GM12878 (cell line): ENCODE measurements at regions of chr11 and their contacts with region 1.

Region 1: DNA sequence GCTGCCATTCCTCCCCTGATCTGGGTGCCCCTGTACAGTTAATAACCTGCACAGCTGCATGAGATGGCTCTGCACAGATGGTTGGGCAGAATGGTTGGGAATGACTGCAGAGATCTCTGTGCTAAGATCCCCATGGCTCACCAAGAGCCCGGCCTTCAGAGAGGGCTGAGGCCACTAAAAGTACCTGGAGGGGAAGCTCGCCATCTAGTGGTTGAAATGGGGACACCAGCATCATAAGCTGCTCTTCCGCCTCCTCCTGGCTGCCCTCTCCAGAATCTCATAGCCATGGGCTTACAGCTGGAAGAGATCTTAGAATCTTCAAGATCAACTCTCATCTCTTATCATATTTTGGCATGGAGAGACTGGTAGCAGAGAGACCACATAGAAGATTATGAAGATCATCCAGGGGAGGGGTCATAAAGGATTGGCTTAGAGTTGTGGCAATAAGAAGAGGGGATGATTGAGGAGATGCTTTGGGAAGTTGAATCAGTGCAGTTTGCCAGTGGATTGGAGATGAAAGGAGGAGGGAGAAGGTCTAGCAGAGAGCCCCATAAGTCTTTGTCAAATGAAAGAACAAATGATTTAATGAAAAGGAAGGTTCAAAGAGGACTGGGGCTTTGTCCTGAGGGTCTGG is 22.0 kb upstream of the TLCD5 start:
- DNase-seq: peak; percentile 37
- ATAC-seq: peak; percentile 92
- H3K4me3 ChIP-seq: no peak overlapping the region
- H3K27ac ChIP-seq: no peak overlapping the region
- H3K4me1 ChIP-seq: peaks cover 7% of the 10 kb centered on the region
- H3K27me3 ChIP-seq: no peaks in the 10 kb centered on the region
- CTCF ChIP-seq: peak; percentile 92 to 99 (median 98); a peak in 5 of 6 replicates
- EP300 ChIP-seq: no peak
- POLR2A ChIP-seq: no peak
- RAD21 ChIP-seq: peak; percentile 87

Region 2: DNA sequence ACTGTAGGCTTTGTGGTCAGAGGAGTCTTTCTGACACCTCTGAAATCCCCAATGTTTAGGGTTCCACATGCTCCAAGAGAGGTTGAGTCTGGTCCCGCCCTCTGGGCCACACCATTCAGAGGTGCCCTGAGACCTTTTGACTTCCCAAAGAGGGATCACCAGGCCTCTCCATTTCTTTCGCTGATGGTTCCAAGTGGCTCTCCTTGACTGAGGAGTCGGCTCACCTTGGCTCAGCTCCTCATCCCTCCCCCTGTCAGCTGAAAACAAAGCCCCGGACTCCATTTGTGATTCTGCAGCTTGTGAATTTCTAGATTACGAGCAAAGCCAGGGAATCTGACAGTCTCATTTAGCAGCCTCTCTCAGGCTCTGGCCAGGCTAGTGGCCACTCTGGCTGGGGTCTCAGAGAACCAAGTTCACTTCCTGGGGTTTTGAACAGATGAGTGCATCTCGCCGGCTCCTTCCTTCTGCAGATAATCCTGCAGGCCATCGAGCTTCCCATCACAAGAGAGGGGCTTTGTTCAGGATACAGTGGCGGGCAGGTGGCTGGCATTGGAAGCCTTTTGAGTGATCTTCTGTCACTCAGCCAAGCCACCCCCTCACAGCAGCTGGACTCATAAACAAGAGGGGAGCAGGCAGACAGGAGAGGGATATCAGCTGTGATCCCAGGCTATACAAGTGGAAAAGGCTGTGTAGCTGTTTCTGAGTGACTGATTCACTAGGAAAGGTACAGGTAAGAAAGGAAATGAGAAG is 268.1 kb before region 1 on chr11:
- CTCF ChIA-PET with region 1: no interaction called
- POLR2A ChIA-PET with region 1: no interaction called
- RAD21 ChIA-PET with region 1: no interaction called
- SMC1A ChIA-PET with region 1: no interaction called
- in situ Hi-C with region 1: no loop called
- intact Hi-C with region 1: no loop called
- DNase-seq: no peak
- ATAC-seq: no peak
- H3K4me3 ChIP-seq: no peak overlapping the region
- H3K27ac ChIP-seq: no peak overlapping the region
- H3K4me1 ChIP-seq: no peaks in the 10 kb centered on the region
- H3K27me3 ChIP-seq: 0 out of 4 replicates have a peak, but pooled peaks cover 0 to 2% of the 10 kb centered on the region in 2 experiments
- CTCF ChIP-seq: no peak
- EP300 ChIP-seq: no peak
- POLR2A ChIP-seq: no peak
- RAD21 ChIP-seq: no peak

Region 3: DNA sequence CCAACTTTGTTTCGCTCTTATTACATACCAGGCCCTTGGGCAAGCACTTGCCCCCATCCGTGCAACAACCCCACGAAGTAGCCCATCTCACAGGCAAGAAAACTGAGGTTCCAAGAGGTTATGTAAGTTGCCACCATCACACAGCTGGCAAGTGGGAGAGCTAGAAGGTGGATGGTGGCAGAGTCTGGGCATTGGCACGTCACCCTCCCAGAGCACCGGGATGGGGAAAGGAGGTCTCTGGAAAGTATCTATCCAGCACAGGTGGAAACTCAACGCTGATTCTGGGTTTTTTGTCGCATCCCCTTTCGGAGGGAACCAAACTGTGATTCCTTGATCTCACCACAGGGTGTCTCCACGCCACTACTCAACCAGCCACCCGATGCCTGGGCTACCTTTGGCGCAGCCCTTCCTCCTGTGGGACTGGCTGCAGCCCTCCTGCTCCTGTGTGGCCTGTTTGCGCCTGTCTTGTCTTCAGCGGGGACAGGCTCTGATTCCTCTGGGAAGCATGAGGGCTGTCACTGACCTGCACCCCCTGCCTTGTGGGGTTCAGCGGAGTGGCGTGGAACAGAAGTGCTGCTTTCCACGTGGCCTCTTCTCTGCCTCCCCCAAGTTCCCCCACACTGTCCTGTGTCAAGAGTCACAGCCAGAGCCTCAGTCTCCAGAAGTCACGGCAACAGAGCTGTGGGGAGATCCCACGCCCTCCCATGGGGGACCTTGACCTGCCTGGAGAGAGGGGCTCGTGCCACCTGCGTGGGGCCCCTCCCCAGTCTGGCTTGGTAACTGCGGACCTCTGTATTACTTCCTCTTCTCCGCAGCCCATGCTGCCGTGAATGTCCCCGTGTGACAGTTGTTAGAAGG is 130.8 kb before region 1 on chr11:
- CTCF ChIA-PET with region 1: interaction called, 83 read pairs
- POLR2A ChIA-PET with region 1: no interaction called
- RAD21 ChIA-PET with region 1: interaction called, 4 read pairs
- SMC1A ChIA-PET with region 1: interaction called, 18 read pairs
- in situ Hi-C with region 1: loop called (anchors 5 kb)
- intact Hi-C with region 1: loop called (anchors 1 kb)
- DNase-seq: no peak
- ATAC-seq: peak; percentile 92
- H3K4me3 ChIP-seq: no peak overlapping the region
- H3K27ac ChIP-seq: no peak overlapping the region
- H3K4me1 ChIP-seq: no peaks in the 10 kb centered on the region
- H3K27me3 ChIP-seq: peaks cover 14% of the 10 kb centered on the region in 2 experiments
- CTCF ChIP-seq: peak; percentile 80 to 91 (median 84)
- EP300 ChIP-seq: no peak
- POLR2A ChIP-seq: no peak
- RAD21 ChIP-seq: peak; percentile 83

Region 4: GRCh38 chr11:120229451-120230424 is 73.4 kb before region 1 on chr11:
- CTCF ChIA-PET with region 1: interaction called, 783 read pairs
- POLR2A ChIA-PET with region 1: interaction called, 7 read pairs
- RAD21 ChIA-PET with region 1: interaction called, 348 read pairs
- SMC1A ChIA-PET with region 1: interaction called, 372 read pairs
- in situ Hi-C with region 1: loop called (anchors 5 kb)
- intact Hi-C with region 1: no loop called
- DNase-seq: no peak
- ATAC-seq: peak; percentile 59
- H3K4me3 ChIP-seq: no peak overlapping the region
- H3K27ac ChIP-seq: no peak overlapping the region
- H3K4me1 ChIP-seq: peaks cover 7% of the 10 kb centered on the region
- H3K27me3 ChIP-seq: peaks cover 5 to 8% of the 10 kb centered on the region in 2 experiments
- CTCF ChIP-seq: peak; percentile 62 to 74 (median 66)
- EP300 ChIP-seq: no peak
- POLR2A ChIP-seq: no peak
- RAD21 ChIP-seq: peak; percentile 71

Region 5: DNA sequence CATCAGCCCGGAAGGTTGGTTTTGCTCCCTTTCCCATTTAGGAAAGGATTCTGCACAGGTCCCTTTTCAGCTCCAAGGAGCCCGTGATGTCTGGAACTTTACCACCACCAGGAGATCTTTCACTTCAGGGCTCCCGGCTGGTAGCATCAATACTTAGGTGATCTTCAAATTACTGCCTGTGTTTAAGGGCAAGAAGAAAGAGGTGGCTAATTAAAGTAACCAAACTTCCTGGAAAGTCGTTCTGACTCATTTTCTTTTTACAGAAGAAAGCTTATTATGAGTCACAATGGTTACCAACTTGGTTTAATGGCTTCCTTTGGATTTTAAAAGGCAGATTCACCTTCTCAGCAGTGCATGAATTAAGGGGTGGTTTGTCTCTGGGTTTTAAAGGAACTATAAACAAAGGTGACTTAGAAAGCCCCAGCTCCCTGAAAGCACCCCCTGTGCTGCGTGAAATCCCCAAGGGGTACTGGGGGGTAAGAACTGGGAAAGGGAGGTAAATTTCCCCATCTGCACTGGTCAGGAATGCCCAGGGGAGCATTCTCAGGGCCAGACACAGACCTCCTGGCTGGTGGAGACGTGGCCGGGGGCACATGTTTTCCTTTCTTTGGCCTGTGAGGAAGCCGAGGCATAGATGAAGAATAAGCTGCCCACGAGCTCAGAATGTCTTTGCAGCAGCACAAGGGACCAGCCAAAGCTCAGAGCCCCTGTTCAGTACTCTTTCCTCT is 54.4 kb before region 1 on chr11:
- CTCF ChIA-PET with region 1: interaction called, 296 read pairs
- POLR2A ChIA-PET with region 1: interaction called, 4 read pairs
- RAD21 ChIA-PET with region 1: interaction called, 127 read pairs
- SMC1A ChIA-PET with region 1: interaction called, 176 read pairs
- in situ Hi-C with region 1: no loop called
- intact Hi-C with region 1: no loop called
- DNase-seq: peak; percentile 93
- ATAC-seq: peak; percentile 87
- H3K4me3 ChIP-seq: peak overlapping the region; percentile 34; the same call in 1 of the 2 replicates
- H3K27ac ChIP-seq: peak overlapping the region; percentile 39
- H3K4me1 ChIP-seq: peaks cover 37% of the 10 kb centered on the region
- H3K27me3 ChIP-seq: no peaks in the 10 kb centered on the region; a peak in 1 of 4 replicates
- CTCF ChIP-seq: no peak
- EP300 ChIP-seq: peak; percentile 91 to 95; a peak in 3 of 4 replicates
- POLR2A ChIP-seq: no peak
- RAD21 ChIP-seq: no peak

Region 6: DNA sequence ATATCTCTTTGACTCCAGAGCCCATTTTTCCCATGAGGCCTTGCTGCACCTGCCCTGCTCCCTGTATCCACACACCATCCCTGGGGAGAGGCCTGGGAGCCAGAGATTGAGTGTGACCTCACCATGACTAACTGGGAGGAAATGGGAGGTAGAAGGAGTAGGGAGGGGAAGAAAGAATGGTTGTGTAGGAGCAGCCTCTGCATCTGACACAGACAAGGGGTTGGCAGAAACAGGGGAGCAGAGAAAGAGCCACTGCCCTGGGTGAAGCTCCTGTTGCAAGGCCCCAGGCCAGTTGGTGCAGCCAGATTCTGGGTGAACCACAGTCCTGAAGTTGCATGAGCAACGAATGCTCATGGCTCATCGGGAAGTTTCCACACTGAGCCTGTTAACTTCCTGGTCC is 30.8 kb before region 1 on chr11:
- CTCF ChIA-PET with region 1: interaction called, 23 read pairs
- POLR2A ChIA-PET with region 1: no interaction called
- RAD21 ChIA-PET with region 1: interaction called, 4 read pairs
- SMC1A ChIA-PET with region 1: interaction called, 6 read pairs
- in situ Hi-C with region 1: no loop called
- intact Hi-C with region 1: no loop called
- DNase-seq: no peak
- ATAC-seq: no peak
- H3K4me3 ChIP-seq: no peak overlapping the region
- H3K27ac ChIP-seq: no peak overlapping the region
- H3K4me1 ChIP-seq: no peaks in the 10 kb centered on the region
- H3K27me3 ChIP-seq: no peaks in the 10 kb centered on the region; a peak in 3 of 4 replicates
- CTCF ChIP-seq: no peak
- EP300 ChIP-seq: no peak
- POLR2A ChIP-seq: no peak
- RAD21 ChIP-seq: no peak

Region 7: GRCh38 chr11:120316842-120317688 is 13.9 kb after region 1 on chr11:
- CTCF ChIA-PET with region 1: interaction called, 15 read pairs
- POLR2A ChIA-PET with region 1: interaction called, 3 read pairs
- RAD21 ChIA-PET with region 1: interaction called, 3 read pairs
- SMC1A ChIA-PET with region 1: interaction called, 18 read pairs
- in situ Hi-C with region 1: no loop called
- intact Hi-C with region 1: no loop called
- DNase-seq: no peak
- ATAC-seq: 0 out of 3 replicates have a peak, but pooled peaks have one; percentile 18
- H3K4me3 ChIP-seq: no peak overlapping the region
- H3K27ac ChIP-seq: no peak overlapping the region
- H3K4me1 ChIP-seq: no peaks in the 10 kb centered on the region
- H3K27me3 ChIP-seq: peaks cover 0 to 2% of the 10 kb centered on the region in 2 experiments; a peak in 2 of 4 replicates
- CTCF ChIP-seq: no peak
- EP300 ChIP-seq: no peak
- POLR2A ChIP-seq: no peak
- RAD21 ChIP-seq: no peak

Region 8: GRCh38 chr11:120354068-120354467 is 50.9 kb after region 1 on chr11:
- CTCF ChIA-PET with region 1: no interaction called
- POLR2A ChIA-PET with region 1: no interaction called
- RAD21 ChIA-PET with region 1: no interaction called
- SMC1A ChIA-PET with region 1: no interaction called
- in situ Hi-C with region 1: no loop called
- intact Hi-C with region 1: no loop called
- DNase-seq: no peak
- ATAC-seq: no peak
- H3K4me3 ChIP-seq: no peak overlapping the region
- H3K27ac ChIP-seq: no peak overlapping the region
- H3K4me1 ChIP-seq: no peaks in the 10 kb centered on the region
- H3K27me3 ChIP-seq: no peaks in the 10 kb centered on the region
- CTCF ChIP-seq: no peak
- EP300 ChIP-seq: no peak
- POLR2A ChIP-seq: no peak
- RAD21 ChIP-seq: no peak